ENCODE measurements at regions of chr14 and their contacts with region 1.

Region 1: GRCh38 chr14:66070509-66071319 is 415.5 kb upstream of the CCDC196 start:
- DNase-seq: peak; percentile 34 to 54 (median 38)
- H3K4me3 ChIP-seq: no peak overlapping the region
- H3K27ac ChIP-seq: no peak overlapping the region
- H3K4me1 ChIP-seq: no peaks in the 10 kb centered on the region
- H3K27me3 ChIP-seq: no peaks in the 10 kb centered on the region

Region 2: GRCh38 chr14:65164068-65164824 is 906.5 kb before region 1 on chr14:
- CTCF ChIA-PET with region 1: interaction called, 15 read pairs
- POLR2A ChIA-PET with region 1: no interaction called
- DNase-seq: peak; percentile 58 to 78 (median 69)
- H3K4me3 ChIP-seq: no peak overlapping the region
- H3K27ac ChIP-seq: no peak overlapping the region
- H3K4me1 ChIP-seq: no peaks in the 10 kb centered on the region
- H3K27me3 ChIP-seq: no peaks in the 10 kb centered on the region

Region 3: GRCh38 chr14:66009089-66009488 is 61.6 kb before region 1 on chr14:
- CTCF ChIA-PET with region 1: no interaction called
- POLR2A ChIA-PET with region 1: no interaction called
- DNase-seq: peak in 2 of 3 donors; percentile 11 to 20
- H3K4me3 ChIP-seq: no peak overlapping the region
- H3K27ac ChIP-seq: no peak overlapping the region
- H3K4me1 ChIP-seq: peaks cover 0 to 15% (median 6%) of the 10 kb centered on the region in 4 experiments
- H3K27me3 ChIP-seq: no peaks in the 10 kb centered on the region

Region 4: DNA sequence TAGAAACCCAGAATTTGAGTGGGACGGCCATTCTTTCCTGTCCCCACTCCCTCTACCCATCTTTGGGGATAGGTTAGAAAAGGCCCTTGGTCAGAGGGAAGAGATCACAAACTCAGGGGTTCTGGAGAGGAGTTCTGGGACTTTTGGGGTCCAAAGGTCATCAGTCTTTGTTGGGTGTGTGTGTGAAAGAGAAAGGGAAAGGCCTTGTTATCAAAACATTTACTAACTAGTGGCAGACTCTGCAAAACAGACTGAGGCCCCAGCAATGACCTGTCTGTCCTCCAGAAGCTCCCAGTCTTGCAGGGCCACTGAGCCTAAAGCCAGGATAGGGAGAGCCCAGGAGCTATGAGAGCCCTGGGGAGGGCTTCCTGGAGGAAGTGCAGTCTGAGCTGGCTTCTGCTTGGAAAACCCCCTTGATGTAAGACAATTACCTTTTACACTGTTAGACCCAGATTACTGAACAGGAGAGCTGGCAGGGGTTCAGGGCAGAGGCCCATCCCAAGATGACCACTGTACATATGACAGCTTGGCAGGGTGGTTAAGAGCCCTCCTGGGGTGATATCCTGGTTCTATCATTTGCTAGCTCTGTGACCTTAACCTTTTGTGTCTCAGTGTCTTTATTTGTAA is 13.7 kb before region 1 on chr14:
- CTCF ChIA-PET with region 1: interaction called, 15 read pairs
- POLR2A ChIA-PET with region 1: no interaction called
- DNase-seq: no peak
- H3K4me3 ChIP-seq: no peak overlapping the region
- H3K27ac ChIP-seq: no peak overlapping the region
- H3K4me1 ChIP-seq: no peaks in the 10 kb centered on the region
- H3K27me3 ChIP-seq: no peaks in the 10 kb centered on the region